ENCODE measurements at regions of chr11 and their contacts with region 1.

Region 1: GRCh38 chr11:5967708-5968107 is 586 bp downstream of the OR56A5 start:
- DNase-seq: peak; percentile 64
- H3K4me3 ChIP-seq: no peak overlapping the region
- H3K27ac ChIP-seq: no peak overlapping the region
- H3K4me1 ChIP-seq: no peaks in the 10 kb centered on the region
- H3K27me3 ChIP-seq: peaks cover 6% of the 10 kb centered on the region
- CTCF ChIP-seq: no peak

Region 2: GRCh38 chr11:5878564-5878963 is 89.1 kb before region 1 on chr11:
- CTCF ChIA-PET with region 1: no interaction called
- dilution Hi-C with region 1: loop called (anchors 5 kb)
- in situ Hi-C with region 1: no loop called
- intact Hi-C with region 1: no loop called
- DNase-seq: no peak
- H3K4me3 ChIP-seq: no peak overlapping the region
- H3K27ac ChIP-seq: no peak overlapping the region
- H3K4me1 ChIP-seq: no peaks in the 10 kb centered on the region
- H3K27me3 ChIP-seq: no peaks in the 10 kb centered on the region
- CTCF ChIP-seq: no peak

Measured in mammary epithelial cell (primary cell).